AG04449 (cell line): ENCODE measurements at regions of chr1 and their contacts with region 1.

Region 1: DNA sequence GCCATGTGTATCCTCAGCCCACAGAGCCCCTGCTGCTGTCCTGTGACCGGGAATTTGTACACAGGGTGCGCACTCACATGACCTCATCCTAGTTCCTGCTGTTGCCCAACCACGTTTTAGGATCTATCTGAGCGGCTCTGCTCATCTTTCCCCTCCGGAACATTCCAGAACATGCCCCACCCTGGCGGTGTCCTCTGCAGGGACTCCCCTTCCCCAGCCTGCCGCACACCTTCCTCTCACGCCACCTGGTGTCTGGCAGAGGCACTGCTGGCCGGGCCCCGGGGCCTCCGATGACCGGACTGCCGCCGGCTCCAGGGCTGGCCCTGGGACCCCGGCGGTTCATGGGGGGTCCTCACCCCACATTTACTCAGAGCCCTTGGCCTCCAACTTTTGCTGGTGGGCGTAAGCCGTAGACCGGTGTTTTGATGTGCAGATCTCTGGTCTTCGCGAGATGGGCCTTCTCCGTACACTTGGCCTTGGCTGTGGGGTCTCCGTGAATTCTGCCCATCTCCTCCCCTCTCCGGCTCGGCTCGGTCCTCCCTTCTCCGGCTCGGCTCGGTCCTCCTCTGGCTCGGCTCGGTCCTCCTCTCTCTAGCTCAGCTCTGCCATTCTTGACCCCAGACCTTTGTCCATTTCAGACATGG is 29.5 kb downstream of the ARHGEF16 start:
- DNase-seq: no peak
- H3K4me3 ChIP-seq: no peak overlapping the region
- CTCF ChIP-seq: peak; percentile 89

Region 2: DNA sequence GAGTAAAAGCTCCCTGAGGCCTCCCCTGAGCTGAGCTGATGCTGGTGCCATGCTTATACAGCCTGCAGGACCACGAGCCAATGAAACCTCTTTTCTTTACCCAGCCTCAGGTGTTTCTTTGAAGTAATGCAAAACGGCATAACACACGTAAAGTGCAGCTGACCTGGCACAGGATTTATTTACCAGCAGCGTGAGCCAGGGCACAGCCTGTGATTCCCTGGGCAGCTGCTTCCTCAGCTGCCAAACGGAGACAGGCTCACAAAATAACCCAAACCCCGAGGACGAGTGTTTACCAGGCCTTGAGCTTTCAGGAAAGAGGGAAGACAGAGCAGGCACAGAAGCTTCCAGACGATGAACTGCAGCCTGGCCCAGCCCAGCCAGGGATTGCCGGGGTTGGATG is 150.0 kb before region 1 on chr1:
- CTCF ChIA-PET with region 1: no interaction called
- POLR2A ChIA-PET with region 1: no interaction called
- DNase-seq: no peak
- H3K4me3 ChIP-seq: no peak overlapping the region
- CTCF ChIP-seq: no peak

Region 3: GRCh38 chr1:3471302-3472087 is 12.4 kb before region 1 on chr1:
- CTCF ChIA-PET with region 1: interaction called, 16 read pairs
- POLR2A ChIA-PET with region 1: no interaction called
- DNase-seq: no peak
- H3K4me3 ChIP-seq: no peak overlapping the region
- CTCF ChIP-seq: peak; percentile 69

Region 4: GRCh38 chr1:3518256-3518655 is 34.3 kb after region 1 on chr1:
- CTCF ChIA-PET with region 1: no interaction called
- POLR2A ChIA-PET with region 1: no interaction called
- DNase-seq: no peak
- H3K4me3 ChIP-seq: no peak overlapping the region
- CTCF ChIP-seq: peak; percentile 54